ENCODE measurements at regions of chr1 and their contacts with region 1.

Region 1: DNA sequence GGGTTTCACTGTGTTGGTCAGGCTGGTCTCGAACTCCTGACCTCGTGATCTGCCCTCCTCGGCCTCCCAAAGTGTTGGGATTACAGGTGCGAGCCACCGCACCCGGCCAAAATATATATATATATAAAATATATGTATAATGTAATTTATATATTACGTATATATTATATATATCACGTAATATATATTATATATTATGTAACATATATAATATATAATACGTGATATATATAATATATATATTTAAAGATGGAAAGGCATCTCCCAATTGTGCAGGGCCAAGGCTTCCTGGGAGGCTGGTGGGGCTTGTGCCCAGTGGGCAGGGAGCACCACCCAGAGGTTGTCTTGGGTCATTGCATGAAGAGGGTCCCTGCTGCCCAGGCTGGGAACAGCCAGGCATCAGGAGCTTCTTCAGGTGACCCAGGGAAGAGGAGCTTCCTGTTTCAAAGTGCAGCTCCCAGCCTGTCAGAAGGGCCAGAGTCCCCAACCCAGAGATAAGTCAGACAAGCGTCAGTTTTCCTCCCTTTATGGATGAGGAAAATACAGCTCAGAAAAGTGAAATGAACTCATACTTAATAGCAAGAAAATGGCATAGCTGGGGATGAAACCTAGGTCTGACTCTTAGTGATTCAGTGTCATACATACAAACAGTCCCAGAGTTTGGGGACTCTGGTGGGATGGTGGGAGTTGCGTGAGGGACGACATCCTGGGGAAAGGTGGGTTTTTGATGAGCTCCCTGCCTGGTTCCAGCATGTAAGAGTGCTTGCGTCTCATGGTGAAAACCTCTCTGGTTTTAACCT is 12.0 kb downstream of the UBE2Q1 start:
- DNase-seq: peak; percentile 65
- ATAC-seq: peak; percentile 80
- H3K4me3 Mint-ChIP-seq: no peak overlapping the region
- H3K27ac Mint-ChIP-seq: no peak overlapping the region
- H3K4me1 Mint-ChIP-seq: peaks cover 8% of the 10 kb centered on the region
- H3K27me3 Mint-ChIP-seq: no peaks in the 10 kb centered on the region

Region 2: DNA sequence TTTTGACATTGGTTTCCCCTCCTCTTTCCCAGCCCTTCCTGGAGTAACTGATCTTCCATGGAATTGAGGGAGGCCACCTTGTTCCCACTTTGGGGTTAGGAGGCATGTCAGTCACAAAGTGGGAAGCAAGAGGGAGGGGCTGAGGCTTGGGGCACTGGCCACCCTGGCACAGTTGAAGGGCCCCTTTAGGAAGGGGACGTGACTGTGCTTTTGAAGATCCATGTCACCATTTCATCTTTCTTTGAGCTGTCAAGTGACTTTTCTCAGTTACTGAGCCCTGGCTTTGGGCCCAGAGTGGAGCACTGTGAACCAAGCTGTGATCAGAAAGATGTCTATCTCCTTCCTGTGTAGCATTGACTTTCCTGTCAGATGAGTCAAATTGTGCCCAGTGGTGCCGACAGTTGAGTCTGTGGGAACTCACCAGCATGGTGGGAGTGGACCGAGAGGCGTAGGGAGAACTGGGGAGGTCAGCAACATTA is 82.9 kb before region 1 on chr1:
- CTCF ChIA-PET with region 1: interaction called, 10 read pairs
- POLR2A ChIA-PET with region 1: no interaction called
- DNase-seq: peak; percentile 64
- ATAC-seq: peak; percentile 87
- H3K4me3 Mint-ChIP-seq: no peak overlapping the region
- H3K27ac Mint-ChIP-seq: peak overlapping the region; percentile 48
- H3K4me1 Mint-ChIP-seq: peaks cover 36% of the 10 kb centered on the region
- H3K27me3 Mint-ChIP-seq: peaks cover 3% of the 10 kb centered on the region

Region 3: DNA sequence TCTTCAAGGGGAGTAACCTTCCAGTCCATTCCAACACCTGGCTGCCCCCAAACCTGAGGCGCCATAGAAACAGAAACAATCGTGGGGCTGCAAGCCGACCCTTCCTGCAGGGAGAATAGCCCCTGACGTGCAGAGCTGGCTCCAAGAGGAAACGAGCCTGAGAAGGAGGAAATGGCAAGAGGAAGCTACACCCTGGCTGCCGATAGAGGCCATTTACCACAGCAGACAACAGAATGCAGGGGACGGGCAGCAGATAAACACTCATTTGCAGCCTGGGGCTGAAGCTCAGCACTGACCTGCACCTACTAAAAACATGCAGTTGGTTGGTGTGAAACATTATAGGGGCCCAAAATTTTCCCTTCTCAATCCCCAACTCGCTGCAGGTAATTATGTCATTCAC is 53.2 kb before region 1 on chr1:
- CTCF ChIA-PET with region 1: interaction called, 12 read pairs
- POLR2A ChIA-PET with region 1: no interaction called
- DNase-seq: peak; percentile 45
- ATAC-seq: peak; percentile 69
- H3K4me3 Mint-ChIP-seq: peak overlapping the region; percentile 26
- H3K27ac Mint-ChIP-seq: peak overlapping the region; percentile 72
- H3K4me1 Mint-ChIP-seq: peaks cover 36% of the 10 kb centered on the region
- H3K27me3 Mint-ChIP-seq: peaks cover 21% of the 10 kb centered on the region

Region 4: GRCh38 chr1:154730259-154730658 is 183.8 kb after region 1 on chr1:
- CTCF ChIA-PET with region 1: no interaction called
- POLR2A ChIA-PET with region 1: no interaction called
- DNase-seq: no peak
- ATAC-seq: no peak
- H3K4me3 Mint-ChIP-seq: no peak overlapping the region
- H3K27ac Mint-ChIP-seq: no peak overlapping the region
- H3K4me1 Mint-ChIP-seq: peaks cover 43% of the 10 kb centered on the region
- H3K27me3 Mint-ChIP-seq: peaks cover 8% of the 10 kb centered on the region